ENCODE measurements at regions of chr15 and their contacts with region 1.

Region 1: DNA sequence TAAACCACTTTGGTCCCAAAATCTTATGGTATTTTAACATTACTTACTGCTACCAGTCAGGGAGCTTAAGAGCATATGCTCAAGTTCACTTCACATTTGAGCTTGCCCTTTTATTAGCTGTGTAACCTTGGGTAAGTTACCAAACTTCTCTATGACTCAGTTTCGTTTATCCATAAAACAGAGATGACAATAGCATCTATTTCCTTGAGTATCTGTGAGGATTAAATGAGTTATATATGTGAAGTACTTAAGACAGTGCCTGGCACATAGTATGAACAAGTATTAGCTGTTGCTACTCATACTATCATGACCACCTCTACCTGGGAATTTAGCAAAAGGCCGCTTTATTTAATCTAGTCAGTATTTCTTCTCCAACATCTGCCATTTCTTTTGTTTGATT is 5.9 kb downstream of the ATOSA start:
- DNase-seq: no peak
- H3K4me3 Mint-ChIP-seq: no peak overlapping the region
- H3K27ac Mint-ChIP-seq: no peak overlapping the region
- H3K4me1 Mint-ChIP-seq: peaks cover 37% of the 10 kb centered on the region
- H3K27me3 Mint-ChIP-seq: no peaks in the 10 kb centered on the region

Region 2: DNA sequence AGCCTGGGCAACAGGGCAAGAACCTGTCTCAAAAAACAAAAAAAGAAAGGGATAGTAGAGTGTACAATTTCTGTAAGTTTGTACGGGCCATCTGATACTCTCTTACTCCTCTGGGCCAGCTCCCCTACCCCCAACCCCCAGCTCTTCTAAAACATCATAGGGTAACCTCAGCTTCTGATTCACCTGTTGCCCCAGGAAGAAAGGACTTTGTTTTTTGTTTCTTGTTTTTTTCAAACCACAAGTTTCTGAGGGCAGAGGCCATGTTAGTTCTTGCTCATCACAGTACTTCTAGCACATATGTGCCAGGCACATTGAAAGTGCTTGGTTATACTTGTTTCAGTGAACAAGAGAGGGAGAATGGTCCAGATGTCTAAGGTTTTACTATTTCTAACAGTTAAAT is 14.4 kb before region 1 on chr15:
- CTCF ChIA-PET with region 1: interaction called, 4 read pairs
- POLR2A ChIA-PET with region 1: interaction called, 10 read pairs
- DNase-seq: peak; percentile 20
- H3K4me3 Mint-ChIP-seq: no peak overlapping the region
- H3K27ac Mint-ChIP-seq: peak overlapping the region; percentile 60
- H3K4me1 Mint-ChIP-seq: peaks cover 36% of the 10 kb centered on the region
- H3K27me3 Mint-ChIP-seq: no peaks in the 10 kb centered on the region

Region 3: GRCh38 chr15:52749258-52749657 is 75.9 kb after region 1 on chr15:
- CTCF ChIA-PET with region 1: no interaction called
- POLR2A ChIA-PET with region 1: no interaction called
- DNase-seq: no peak
- H3K4me3 Mint-ChIP-seq: no peak overlapping the region
- H3K27ac Mint-ChIP-seq: no peak overlapping the region
- H3K4me1 Mint-ChIP-seq: no peaks in the 10 kb centered on the region
- H3K27me3 Mint-ChIP-seq: peaks cover 38% of the 10 kb centered on the region